Mammary epithelial cell (primary cell): ENCODE measurements at regions of chr1 and their contacts with region 1.

Region 1: DNA sequence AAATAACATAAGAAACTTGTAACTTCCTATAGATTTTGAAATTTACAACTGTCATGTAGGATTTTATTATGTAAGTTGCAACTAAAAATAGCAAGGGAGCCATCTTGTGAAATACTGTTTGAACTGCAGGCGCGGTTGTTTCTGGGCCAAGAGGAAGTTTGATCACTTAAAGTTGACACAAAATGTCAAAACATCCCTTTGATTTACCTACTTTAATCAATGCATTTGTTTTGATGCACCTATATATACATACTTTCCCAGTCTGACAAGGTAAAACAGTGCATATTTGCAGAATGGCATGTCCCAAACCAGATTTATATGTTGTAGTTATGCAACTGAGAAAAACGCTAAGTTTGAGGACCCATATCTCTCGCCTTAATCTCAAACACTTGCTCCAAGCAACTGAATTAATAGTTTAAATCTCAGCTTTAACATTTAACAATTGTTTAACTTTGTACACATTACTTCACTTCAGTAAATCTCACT is 63.8 kb downstream of the KCNK2 start:
- DNase-seq: peak; percentile 10
- H3K4me3 ChIP-seq: no peak overlapping the region
- H3K27ac ChIP-seq: no peak overlapping the region
- H3K4me1 ChIP-seq: no peaks in the 10 kb centered on the region
- H3K27me3 ChIP-seq: no peaks in the 10 kb centered on the region
- CTCF ChIP-seq: peak; percentile 67 to 71

Region 2: DNA sequence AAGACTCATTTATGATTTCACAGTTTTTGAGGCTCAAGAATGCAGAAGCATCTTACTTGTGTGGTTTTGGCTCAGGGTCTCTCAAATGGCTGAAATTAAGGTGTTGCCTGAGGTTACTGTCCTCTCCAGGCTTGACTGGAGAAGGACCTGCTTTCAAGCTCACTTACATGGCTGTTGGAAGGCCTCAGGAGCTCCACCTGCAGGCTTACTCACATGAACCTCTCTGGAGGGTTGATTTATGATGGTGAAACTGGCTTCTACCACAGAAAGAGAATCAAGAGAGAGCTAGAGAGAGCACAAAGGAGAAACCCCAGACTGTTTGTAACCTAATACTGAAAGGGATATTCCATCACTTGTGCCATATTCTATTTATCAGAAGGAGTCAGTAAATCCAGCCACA is 70.1 kb before region 1 on chr1:
- CTCF ChIA-PET with region 1: no interaction called
- dilution Hi-C with region 1: no loop called
- in situ Hi-C with region 1: no loop called
- intact Hi-C with region 1: loop called (anchors 2 kb)
- DNase-seq: peak; percentile 50
- H3K4me3 ChIP-seq: no peak overlapping the region
- H3K27ac ChIP-seq: no peak overlapping the region
- H3K4me1 ChIP-seq: no peaks in the 10 kb centered on the region
- H3K27me3 ChIP-seq: no peaks in the 10 kb centered on the region
- CTCF ChIP-seq: peak; percentile 49 to 72

Region 3: GRCh38 chr1:215128504-215128903 is 17.9 kb before region 1 on chr1:
- CTCF ChIA-PET with region 1: no interaction called
- dilution Hi-C with region 1: no loop called
- in situ Hi-C with region 1: no loop called
- intact Hi-C with region 1: no loop called
- DNase-seq: no peak
- H3K4me3 ChIP-seq: no peak overlapping the region
- H3K27ac ChIP-seq: no peak overlapping the region
- H3K4me1 ChIP-seq: no peaks in the 10 kb centered on the region
- H3K27me3 ChIP-seq: no peaks in the 10 kb centered on the region
- CTCF ChIP-seq: no peak